MCF 10A (cell line): ENCODE measurements at regions of chr2 and their contacts with region 1.

Region 1: DNA sequence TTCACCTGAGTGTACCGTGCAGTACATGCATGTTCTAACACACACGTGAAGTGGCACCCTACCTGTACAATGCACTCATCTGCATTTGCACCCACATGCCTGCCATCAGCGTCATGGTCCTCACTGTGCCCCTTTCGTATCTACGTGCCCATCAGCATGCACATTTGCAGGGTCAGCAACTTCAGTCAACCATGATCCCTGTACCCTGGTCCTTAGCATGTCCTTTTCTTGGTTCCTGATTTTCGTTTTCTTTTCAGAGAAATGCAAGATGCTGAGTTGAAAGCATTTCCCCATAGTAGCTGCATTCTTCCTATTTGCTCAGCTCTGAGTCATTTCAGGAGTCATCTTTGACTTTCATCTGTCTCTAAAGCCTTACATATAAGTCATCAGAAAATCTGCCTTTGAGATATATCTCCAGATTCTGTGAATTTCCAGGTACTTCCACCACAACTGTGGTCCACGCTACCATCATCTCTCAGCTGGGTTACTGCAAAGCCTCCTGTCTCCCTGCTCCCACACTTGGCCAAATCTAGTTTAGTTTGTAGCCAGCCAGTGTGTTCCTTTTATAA is 14.7 kb upstream of the PUM2 start:
- DNase-seq: peak; percentile 53
- H3K4me3 Mint-ChIP-seq: no peak overlapping the region
- H3K27ac Mint-ChIP-seq: no peak overlapping the region
- H3K4me1 Mint-ChIP-seq: peaks cover 33% of the 10 kb centered on the region
- H3K27me3 Mint-ChIP-seq: no peaks in the 10 kb centered on the region
- CTCF ChIP-seq: no peak

Region 2: DNA sequence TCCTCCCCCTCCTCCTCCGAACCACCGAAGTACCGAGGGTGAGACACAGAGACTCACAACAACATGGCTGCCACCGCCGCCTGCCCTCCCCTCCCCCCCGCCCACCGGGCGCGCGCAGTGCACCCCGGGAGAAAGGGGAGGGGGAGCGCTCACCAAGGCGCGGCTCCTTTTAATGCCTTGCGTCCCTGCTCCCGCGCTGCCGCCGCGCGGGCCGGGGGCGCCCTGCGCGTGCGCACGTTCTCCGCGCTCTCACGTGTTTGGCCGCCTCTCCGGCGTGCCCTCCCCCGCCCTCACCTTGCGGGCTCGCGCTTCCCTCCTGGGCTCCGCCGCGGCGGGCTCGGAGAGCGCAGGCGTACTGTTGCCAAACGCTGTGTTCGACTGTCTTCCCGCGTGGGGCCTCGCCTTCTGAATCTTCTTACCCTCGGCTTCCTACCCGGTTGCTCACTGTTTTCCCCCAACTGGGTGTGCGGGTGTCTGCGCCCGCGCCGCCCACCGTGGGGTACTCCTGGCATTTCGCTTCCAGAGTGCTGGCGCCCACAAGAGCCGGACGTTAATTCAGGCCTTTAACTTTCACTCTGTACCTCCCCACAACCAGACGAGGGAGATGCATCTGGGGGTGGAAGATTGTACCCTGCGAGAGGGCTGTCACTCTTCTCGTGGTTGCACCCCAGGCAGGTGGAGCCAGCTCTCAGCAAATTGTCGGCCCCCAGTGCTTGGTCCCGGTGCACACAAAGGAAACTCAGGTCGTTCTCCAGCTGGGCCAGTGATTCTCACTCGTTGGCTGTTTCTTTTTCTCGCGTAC is 14.4 kb before region 1 on chr2 and contains the start of gene PUM2:
- CTCF ChIA-PET with region 1: interaction called, 5 read pairs
- POLR2A ChIA-PET with region 1: interaction called, 91 read pairs
- intact Hi-C with region 1: no loop called
- DNase-seq: peak; percentile 96
- H3K4me3 Mint-ChIP-seq: no peak within 1 kb of the TSS
- H3K27ac Mint-ChIP-seq: no peak within 1 kb of the TSS
- H3K4me1 Mint-ChIP-seq: peaks cover 20% of the 10 kb centered on the region
- H3K27me3 Mint-ChIP-seq: no peaks in the 10 kb centered on the region
- CTCF ChIP-seq: no peak
- total RNA-seq, gene PUM2: 86.7 and 94.0 TPM in 2 replicates

Region 3: DNA sequence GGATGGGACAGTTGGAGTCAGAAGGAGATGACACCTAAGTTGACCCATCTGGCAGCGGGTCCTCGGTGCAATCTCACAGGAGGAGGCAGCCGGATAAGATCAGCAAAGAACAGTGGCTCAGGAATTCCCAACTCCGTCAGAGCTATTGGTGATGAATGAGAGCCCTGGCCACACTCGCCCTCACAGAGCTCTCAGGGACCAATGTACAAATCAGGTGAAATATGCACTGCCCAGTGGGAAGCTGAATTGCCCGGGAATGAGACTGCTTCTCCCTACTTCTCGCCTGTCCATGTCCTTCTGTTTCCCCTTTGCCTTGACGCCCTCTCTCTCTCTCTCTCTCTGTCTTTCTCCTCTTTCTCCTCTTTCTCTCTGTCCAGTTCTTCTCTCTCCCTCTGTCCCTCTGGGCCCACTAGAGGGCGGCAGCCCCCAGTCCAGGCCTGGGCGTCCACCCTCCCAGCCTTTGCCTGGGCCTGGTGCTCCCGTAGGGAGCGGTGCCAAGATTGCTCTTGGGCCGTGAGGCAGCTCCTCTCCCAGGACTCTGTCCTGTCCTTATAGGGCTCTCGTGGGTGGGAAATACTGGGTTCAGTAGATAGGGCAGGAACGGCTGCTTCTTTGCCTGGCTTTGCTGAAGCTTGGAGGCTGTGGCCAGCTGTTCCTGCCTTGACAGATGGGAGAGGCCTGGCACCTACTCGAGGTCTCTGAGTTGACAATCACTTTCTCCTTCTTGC is 13.6 kb after region 1 on chr2:
- CTCF ChIA-PET with region 1: interaction called, 10 read pairs
- POLR2A ChIA-PET with region 1: interaction called, 8 read pairs
- intact Hi-C with region 1: no loop called
- DNase-seq: peak; percentile 83
- H3K4me3 Mint-ChIP-seq: no peak overlapping the region
- H3K27ac Mint-ChIP-seq: no peak overlapping the region
- H3K4me1 Mint-ChIP-seq: no peaks in the 10 kb centered on the region
- H3K27me3 Mint-ChIP-seq: no peaks in the 10 kb centered on the region
- CTCF ChIP-seq: peak; percentile 48